A673 (cell line): ENCODE measurements at regions of chr9 and their contacts with region 1.

Region 1: DNA sequence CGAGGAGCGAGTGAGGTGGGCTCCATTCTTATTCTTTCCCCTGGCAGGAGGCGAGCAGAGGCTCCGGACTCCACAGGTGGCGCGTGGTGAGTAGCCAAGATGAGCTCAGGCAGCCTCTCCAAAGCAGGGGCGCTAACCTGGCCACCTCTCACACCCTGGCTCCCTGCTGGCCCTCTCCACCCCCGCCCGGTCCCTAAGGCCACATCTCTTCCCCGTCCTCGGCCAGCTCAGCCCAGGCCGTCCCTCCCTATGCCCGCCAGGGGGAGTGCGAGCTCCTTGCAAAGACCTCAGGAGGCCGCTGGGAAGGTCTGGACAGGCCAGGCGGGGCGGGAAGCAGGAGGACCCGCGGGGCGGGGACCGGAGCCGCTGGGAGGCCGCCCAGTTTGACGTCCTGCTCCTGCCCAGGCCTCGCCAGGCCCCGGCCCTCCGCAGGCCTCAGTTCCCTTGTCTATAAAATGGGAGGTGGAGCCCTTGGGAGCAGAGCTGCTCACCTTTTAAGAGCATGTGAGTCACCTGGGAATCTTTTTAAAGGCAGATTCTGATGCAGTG is 46.3 kb upstream of the GGTA1 start:
- DNase-seq: peak; percentile 90
- H3K4me3 ChIP-seq: no peak overlapping the region
- H3K27ac ChIP-seq: no peak overlapping the region
- H3K4me1 ChIP-seq: peaks cover 4% of the 10 kb centered on the region
- H3K27me3 ChIP-seq: no peaks in the 10 kb centered on the region
- CTCF ChIP-seq: peak; percentile 97

Region 2: DNA sequence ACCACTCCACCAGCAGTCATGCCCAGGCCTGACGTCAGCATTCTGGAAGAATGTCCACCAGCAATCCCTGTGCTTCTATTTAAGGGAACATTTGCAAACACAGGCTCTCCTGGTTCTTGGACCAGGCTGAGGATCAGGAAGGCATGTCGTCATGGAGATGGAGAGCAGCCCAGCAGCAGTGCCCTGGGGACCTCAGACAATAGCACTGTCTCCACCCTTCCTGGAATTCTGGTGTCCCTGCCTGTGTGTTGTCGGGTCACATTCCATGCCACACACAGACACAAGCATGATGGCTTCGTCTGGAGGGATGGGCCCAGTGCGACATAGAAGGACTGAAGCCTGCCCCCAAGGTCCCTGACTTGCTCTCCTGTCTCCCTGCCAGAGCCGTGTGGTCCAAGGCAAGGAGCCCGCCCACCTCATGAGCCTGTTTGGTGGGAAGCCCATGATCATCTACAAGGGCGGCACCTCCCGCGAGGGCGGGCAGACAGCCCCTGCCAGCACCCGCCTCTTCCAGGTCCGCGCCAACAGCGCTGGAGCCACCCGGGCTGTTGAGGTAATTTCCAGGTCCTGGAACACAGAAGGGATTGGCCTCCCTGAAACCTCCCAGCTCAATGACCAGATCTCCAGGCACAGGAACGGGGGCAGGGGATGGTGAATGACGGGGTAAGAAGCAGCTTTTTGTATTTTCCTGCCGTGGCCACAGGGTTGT is 219.7 kb before region 1 on chr9:
- CTCF ChIA-PET with region 1: no interaction called
- POLR2A ChIA-PET with region 1: no interaction called
- intact Hi-C with region 1: no loop called
- DNase-seq: peak; percentile 36
- H3K4me3 ChIP-seq: no peak overlapping the region
- H3K27ac ChIP-seq: no peak overlapping the region
- H3K4me1 ChIP-seq: no peaks in the 10 kb centered on the region
- H3K27me3 ChIP-seq: no peaks in the 10 kb centered on the region
- CTCF ChIP-seq: no peak

Region 3: DNA sequence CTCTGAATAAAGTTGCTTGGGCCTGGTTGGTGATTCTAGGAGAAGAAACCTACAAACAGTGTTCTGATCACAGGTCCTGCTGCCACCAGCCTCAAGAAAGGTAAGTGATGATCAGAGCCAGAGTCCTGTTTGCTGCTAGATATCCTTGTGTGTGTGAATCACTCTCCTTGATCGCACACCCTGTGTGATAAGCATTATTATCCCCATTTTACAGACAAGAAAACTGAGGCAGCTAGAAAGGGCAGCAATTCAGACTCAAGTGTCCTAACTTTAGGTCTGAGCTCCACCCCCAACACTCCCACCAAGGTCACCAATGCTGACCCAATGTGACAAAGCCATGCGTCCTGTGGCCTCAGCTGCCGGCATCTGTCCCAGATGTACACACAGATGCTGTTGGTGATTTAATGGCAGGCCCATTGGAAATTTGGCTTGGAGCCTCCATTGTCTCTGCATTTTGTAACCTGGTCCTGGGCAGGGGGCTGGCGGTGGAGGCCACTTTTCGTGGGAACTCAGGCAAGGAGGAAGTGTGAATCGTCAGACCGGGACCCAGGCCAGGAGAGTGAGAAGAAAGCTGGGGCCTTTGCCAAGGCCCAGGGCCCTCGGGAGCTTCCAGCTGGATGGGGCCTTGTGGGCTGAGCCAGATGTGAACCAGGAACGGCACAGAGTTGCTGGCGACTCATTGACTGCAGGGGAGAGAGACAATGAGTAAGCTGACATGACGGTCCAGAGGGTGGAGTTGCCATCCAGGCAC is 16.5 kb before region 1 on chr9:
- CTCF ChIA-PET with region 1: no interaction called
- POLR2A ChIA-PET with region 1: interaction called, 12 read pairs
- intact Hi-C with region 1: no loop called
- DNase-seq: peak; percentile 77
- H3K4me3 ChIP-seq: no peak overlapping the region
- H3K27ac ChIP-seq: no peak overlapping the region
- H3K4me1 ChIP-seq: peaks cover 7% of the 10 kb centered on the region
- H3K27me3 ChIP-seq: no peaks in the 10 kb centered on the region
- CTCF ChIP-seq: no peak

Region 4: GRCh38 chr9:121621113-121621449 is 75.1 kb after region 1 on chr9:
- CTCF ChIA-PET with region 1: interaction called, 3 read pairs
- POLR2A ChIA-PET with region 1: no interaction called
- intact Hi-C with region 1: loop called (anchors 5 kb)
- DNase-seq: peak; percentile 50
- H3K4me3 ChIP-seq: no peak overlapping the region
- H3K27ac ChIP-seq: no peak overlapping the region
- H3K4me1 ChIP-seq: no peaks in the 10 kb centered on the region
- H3K27me3 ChIP-seq: peaks cover 5% of the 10 kb centered on the region
- CTCF ChIP-seq: peak; percentile 63

Region 5: DNA sequence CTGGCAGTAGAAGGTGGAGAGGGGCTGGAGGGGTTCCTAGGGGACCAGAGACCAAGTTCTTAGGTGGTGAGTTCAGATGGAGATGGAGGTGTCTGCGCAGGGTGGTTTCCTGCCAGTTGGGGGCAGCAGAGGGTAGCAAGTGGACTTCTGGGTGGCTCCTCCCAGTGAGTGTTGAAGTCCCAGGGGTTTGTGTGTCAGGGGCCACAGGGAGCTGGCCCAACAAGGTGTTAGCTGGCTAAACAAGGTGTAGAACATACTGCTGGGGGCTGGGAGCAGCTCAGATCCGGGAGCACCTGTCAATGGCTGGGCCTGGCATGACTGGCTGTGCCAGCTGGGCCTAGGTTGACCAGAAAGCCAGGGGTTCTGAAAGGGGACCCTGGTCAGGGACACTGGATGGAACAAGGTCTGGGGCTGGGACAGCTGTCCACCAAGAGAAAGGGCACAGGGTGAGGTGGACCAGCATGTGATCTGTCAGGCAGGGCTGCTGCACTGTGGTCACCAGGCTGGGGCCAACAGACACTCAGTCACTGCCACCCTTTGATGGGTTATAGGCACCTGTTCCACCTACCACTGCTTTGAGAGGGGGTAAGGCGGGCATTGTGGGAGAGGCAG is 141.1 kb after region 1 on chr9:
- CTCF ChIA-PET with region 1: interaction called, 5 read pairs
- POLR2A ChIA-PET with region 1: no interaction called
- intact Hi-C with region 1: loop called (anchors 5 kb)
- DNase-seq: peak; percentile 73
- H3K4me3 ChIP-seq: no peak overlapping the region
- H3K27ac ChIP-seq: no peak overlapping the region
- H3K4me1 ChIP-seq: no peaks in the 10 kb centered on the region
- H3K27me3 ChIP-seq: no peaks in the 10 kb centered on the region
- CTCF ChIP-seq: peak; percentile 91

Region 6: GRCh38 chr9:121929893-121930875 is 384.2 kb after region 1 on chr9:
- CTCF ChIA-PET with region 1: no interaction called
- POLR2A ChIA-PET with region 1: no interaction called
- intact Hi-C with region 1: no loop called
- DNase-seq: no peak
- H3K4me3 ChIP-seq: no peak overlapping the region
- H3K27ac ChIP-seq: no peak overlapping the region
- H3K4me1 ChIP-seq: no peaks in the 10 kb centered on the region
- H3K27me3 ChIP-seq: no peaks in the 10 kb centered on the region
- CTCF ChIP-seq: peak; percentile 27; the same call in 1 of the 2 replicates

Region 7: GRCh38 chr9:121992571-121993212 is 446.7 kb after region 1 on chr9:
- CTCF ChIA-PET with region 1: no interaction called
- POLR2A ChIA-PET with region 1: no interaction called
- intact Hi-C with region 1: loop called (anchors 2 kb)
- DNase-seq: peak; percentile 86
- H3K4me3 ChIP-seq: no peak overlapping the region
- H3K27ac ChIP-seq: no peak overlapping the region
- H3K4me1 ChIP-seq: no peaks in the 10 kb centered on the region
- H3K27me3 ChIP-seq: no peaks in the 10 kb centered on the region
- CTCF ChIP-seq: peak; percentile 86

Region 8: GRCh38 chr9:122350638-122351355 is 804.8 kb after region 1 on chr9:
- CTCF ChIA-PET with region 1: interaction called, 3 read pairs
- POLR2A ChIA-PET with region 1: no interaction called
- intact Hi-C with region 1: loop called (anchors 5 kb)
- DNase-seq: peak; percentile 75
- H3K4me3 ChIP-seq: no peak overlapping the region
- H3K27ac ChIP-seq: no peak overlapping the region
- H3K4me1 ChIP-seq: no peaks in the 10 kb centered on the region
- H3K27me3 ChIP-seq: peaks cover 43% of the 10 kb centered on the region
- CTCF ChIP-seq: peak; percentile 96